ENCODE measurements at regions of chr6 and their contacts with region 1.

Region 1: GRCh38 chr6:108541838-108542759 is 18.6 kb upstream of the FOXO3 start:
- DNase-seq: peak; percentile 80
- ATAC-seq: peak; percentile 85

Region 2: GRCh38 chr6:108896111-108896661 is 354.1 kb after region 1 on chr6:
- intact Hi-C with region 1: loop called (anchors 5 kb)
- DNase-seq: no peak
- ATAC-seq: peak; percentile 89

Region 3: GRCh38 chr6:108983151-108983550 is 441.1 kb after region 1 on chr6:
- intact Hi-C with region 1: no loop called
- DNase-seq: no peak
- ATAC-seq: no peak

Region 4: GRCh38 chr6:109073344-109074132 is 531.4 kb after region 1 on chr6:
- intact Hi-C with region 1: loop called (anchors 10 kb)
- DNase-seq: no peak
- ATAC-seq: peak; percentile 74

Region 5: DNA sequence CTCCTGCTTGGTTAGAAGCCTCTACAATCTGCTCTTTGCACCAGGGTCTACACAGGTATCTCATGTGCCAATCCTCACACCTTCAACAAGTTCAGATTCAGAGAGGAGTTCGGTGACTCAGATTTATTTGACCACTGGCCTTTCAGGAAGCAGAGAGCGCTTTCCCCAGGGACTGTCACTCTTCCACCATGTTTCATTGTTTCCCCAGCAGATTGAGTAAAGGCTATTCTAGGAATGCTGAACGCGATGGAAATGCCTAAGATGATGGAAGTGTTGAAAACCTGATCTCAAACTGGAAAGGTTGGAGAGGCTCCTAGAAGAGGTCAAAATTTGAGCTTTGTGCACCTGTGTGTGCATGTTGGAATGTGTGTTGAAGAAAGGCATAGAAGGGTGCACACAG is 1359.4 kb after region 1 on chr6:
- intact Hi-C with region 1: loop called (anchors 5 kb)
- DNase-seq: no peak
- ATAC-seq: no peak

Region 6: DNA sequence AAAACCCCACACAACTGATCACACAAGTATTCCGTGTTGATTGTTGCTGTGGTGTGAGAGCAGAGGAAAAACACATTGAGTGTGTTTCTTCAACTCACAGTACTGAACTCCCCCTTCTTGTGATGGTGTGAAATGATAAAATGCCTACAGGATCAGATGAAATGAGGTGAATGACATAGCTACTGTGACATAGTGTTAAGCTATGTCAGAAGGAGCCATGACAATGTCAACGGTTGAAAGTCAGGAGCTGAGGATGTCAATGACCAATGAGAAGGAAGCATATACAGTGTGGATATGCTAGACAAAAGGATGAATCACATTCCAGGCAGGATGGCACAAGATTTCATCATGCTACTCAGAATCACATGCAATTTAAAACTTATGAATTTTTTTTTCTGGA is 1598.6 kb after region 1 on chr6:
- intact Hi-C with region 1: no loop called
- DNase-seq: no peak
- ATAC-seq: no peak